Astrocyte of the cerebellum (primary cell): ENCODE measurements at regions of chrX and their contacts with region 1.

Region 1: GRCh38 chrX:151724563-151725337 is 8.9 kb downstream of the FATE1 start:
- DNase-seq: no peak
- H3K4me3 ChIP-seq: no peak overlapping the region
- CTCF ChIP-seq: no peak

Region 2: GRCh38 chrX:151633157-151633556 is 91.6 kb before region 1 on chrX:
- in situ Hi-C with region 1: no loop called
- DNase-seq: no peak
- H3K4me3 ChIP-seq: no peak overlapping the region
- CTCF ChIP-seq: no peak

Region 3: GRCh38 chrX:151675121-151675746 is 49.5 kb before region 1 on chrX:
- in situ Hi-C with region 1: no loop called
- DNase-seq: no peak
- H3K4me3 ChIP-seq: no peak overlapping the region
- CTCF ChIP-seq: no peak

Region 4: GRCh38 chrX:151773434-151773833 is 48.7 kb after region 1 on chrX:
- in situ Hi-C with region 1: no loop called
- DNase-seq: no peak
- H3K4me3 ChIP-seq: no peak overlapping the region
- CTCF ChIP-seq: no peak

Region 5: GRCh38 chrX:151830911-151831310 is 106.2 kb after region 1 on chrX:
- in situ Hi-C with region 1: no loop called
- DNase-seq: no peak
- H3K4me3 ChIP-seq: no peak overlapping the region
- CTCF ChIP-seq: no peak

Region 6: DNA sequence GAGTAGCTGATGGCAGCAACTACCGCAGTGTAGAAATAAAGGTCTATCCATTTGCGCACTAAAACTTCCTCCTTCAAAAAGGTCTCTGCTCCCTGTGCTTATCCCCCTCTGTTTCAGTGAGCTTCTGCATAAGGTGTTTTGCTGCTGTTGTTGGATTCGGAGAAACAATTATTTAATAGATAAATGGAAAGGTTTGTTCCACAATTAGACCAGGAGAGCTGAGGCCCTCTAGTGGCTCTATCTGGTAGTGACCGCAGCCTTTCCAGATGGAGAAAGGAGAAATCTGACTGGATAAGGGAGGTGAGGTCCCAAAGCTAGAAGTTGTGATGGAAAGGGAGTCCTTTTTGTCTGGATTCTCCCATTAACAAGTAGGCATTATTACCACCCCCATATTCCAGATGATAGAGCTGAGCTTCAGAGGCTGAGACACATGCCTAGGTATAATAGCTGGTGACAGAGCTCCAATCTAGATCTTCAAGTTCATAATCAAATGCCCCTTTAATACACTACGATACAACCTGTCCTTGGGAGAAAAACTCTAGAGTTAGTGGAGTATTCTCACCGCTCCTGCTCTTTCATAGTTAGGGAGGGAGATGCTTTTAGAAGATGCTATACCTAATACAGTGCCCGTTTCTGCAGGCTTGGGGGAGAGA is 907.8 kb after region 1 on chrX:
- in situ Hi-C with region 1: loop called (anchors 25 kb)
- DNase-seq: peak; percentile 19
- H3K4me3 ChIP-seq: no peak overlapping the region
- CTCF ChIP-seq: peak; percentile 84